Cardiac septum (tissue), 1 donor: ENCODE measurements at regions of chr3 and their contacts with region 1.

Region 1: DNA sequence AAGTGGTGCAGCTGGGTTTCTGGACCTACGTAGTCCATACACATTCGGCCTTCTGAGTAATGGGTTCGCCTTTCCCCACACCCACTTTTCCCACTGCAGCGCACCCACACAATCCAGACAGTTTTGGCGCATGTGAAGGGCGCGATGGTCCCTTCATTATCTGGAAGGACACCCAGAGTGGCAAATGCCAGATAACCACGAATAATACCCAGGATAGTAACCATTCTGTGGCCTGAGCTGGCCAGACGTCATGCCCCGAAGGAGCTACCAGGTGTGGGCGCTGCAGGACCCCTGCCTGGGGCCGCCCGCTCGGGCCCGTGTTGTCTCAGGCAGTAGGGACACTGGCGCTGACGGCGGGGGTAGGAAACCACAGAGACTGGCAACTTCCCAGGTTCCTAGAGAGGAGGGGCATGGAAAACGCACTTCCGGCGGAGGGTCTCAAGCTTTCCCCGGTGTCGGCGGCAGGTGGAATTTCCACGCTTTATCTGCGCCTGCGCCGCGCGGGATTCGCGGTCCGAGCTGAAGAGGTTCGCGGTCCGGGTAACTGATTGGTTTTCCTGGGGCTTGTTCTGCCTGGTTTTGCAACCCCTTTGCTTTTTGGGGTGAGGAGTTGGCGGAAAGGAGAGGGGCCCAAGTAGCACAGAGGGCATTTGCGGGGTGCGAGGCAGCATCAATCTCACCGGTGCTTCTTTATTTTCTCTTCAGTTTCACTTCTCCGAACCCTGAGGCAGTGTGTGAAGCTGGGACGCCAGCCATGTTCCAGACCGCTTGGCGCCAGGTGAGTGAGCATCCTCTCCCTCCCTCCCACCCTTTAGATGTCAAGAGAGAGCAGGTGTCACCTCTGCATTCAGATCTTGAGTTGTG is at the start of gene ZNF620:
- DNase-seq: peak; percentile 83
- total RNA-seq, gene ZNF620: 1.5 TPM

Region 2: DNA sequence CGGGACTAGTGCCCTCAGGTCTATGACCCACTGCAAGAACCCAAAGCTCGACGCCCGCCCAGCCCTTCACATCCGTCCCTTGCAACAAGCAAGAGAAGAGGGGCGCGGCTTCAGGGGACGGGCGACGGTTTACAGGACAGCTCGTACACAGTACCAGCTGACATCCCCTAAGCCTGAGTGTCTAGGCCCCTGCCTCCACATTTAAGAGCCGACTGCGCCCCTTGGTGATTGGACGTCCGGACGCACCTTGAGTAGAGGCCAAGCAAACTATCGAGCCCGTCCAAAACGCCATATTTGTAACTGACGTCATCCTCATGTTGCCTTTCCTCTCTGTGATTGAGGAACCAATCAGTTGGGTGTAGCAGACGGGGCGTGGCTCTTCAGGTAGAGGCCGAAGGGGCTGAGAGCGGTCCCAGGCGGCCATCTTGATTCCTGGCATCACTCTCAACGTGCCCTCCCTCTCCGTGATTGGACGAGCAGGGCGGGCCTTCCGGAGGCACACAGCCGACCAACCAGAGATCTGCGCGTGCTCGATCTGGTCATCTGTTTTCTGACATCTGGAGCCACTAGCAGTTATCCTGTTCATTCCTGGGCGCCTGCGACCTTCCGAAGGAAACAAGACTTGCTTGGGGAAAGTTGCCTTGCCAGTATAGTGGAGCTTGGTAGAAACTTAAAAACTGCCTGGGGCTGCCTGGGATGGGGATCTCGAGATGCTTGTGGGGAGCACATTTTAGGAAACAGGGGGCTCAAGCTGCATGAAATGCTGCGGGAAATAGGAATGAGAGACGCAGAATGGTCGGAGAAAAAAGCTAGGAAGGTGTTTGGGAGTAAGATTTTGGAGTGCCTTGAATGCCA is 52.7 kb before region 1 on chr3:
- intact Hi-C with region 1: loop called (anchors 5 kb)
- DNase-seq: peak; percentile 99

Region 3: DNA sequence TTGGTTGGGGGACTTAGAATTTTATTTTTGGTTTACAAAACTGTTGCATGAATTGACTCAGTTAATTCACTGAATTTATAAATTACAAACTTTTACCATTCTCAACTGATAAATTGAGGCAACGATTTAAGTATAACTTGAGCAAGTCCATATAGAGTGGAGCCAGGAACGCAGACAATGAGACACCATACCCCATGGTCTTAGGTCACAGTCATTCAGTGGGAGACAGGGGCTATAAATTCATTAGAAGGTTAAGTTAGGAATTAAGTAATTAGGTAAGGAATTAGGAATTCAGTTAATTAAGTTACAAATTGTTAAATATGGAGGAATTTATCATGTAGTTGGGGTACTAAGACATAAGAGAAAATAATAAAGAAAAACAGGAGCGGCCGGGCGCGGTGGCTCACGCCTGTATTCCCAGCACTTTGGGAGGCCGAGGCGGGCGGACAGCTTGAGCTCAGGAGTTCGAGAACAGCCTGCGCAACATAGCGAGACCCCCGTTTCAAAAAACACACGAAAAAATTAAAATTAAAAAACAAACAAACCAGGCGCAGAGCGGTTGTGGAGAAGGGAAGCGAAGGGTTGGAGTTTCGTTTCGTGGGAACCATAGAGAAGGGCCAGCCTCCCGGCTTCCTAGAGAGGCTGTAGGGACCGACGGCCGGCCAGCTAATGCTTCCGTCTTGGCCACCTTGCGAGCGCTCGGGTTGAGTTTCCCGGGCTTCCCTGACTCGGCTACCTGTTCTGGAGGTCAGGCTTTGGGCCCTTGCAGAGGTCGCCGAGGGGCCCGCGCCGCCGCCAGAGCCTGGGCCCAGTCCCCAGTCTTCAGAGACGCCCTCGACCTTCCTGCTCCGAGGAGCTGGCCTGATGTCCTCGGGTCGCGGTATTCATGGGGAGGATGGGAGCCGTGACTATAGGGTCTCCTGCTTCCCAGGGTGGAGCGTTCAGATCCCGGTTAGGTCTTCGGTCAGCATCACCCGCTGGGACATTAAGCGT is 29.1 kb before region 1 on chr3 and contains the start of gene ZNF619:
- intact Hi-C with region 1: loop called (anchors 1 kb)
- DNase-seq: peak; percentile 92
- total RNA-seq, gene ZNF619: 3.6 TPM

Region 4: DNA sequence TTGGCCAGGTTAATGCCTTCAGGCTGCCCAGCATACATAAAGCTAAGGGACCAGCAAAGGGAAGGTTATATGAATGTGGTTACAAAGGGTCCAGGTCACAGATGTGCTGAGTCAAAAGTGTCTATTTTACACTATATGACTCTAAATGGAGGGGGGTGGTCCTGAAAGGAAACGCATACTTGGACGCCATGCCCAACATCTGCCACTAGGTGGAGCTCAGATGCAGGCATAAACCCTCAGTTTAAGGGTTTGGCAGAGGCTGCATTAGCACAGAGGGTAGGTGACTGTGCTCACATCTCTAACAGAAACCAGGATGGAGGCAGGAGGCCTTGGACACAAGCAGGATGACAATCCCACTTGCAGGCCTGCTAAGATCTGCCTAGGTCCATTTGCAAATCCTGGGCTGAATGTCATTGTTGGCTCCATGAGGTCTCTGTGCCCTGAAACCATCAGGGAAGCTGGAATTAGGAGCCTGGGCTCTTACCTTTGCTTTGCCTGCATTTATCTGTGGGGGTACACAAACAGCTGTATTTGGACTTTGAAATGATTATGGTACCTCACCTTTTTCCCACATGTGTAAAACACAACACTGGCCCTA is 74.8 kb after region 1 on chr3:
- intact Hi-C with region 1: no loop called
- DNase-seq: no peak